Sciatic nerve (tissue), 2 donors: ENCODE measurements at regions of chr17 and their contacts with region 1.

Region 1: DNA sequence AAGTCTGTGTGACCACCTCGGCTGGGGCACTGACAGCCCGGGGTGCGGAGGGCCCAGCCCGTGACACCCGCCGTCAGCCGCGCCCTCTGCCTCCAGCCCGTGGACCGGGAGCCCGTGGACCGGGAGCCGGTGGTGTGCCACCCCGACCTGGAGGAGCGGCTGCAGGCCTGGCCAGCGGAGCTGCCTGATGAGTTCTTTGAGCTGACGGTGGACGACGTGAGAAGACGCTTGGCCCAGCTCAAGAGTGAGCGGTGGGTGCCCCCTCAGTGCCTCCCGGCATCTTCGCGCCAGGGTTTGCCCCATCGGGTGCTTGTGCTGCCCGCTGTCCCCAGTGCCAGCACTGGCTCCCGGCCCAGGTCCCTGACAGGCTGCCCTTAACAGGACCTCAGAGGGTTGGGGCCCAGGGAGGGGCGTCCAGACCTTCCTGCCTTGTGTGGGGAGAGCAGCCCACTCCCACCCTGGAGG is 13.7 kb downstream of the CENPX start:
- DNase-seq: no peak
- ATAC-seq: no peak

Region 2: GRCh38 chr17:82030470-82031302 is 21.7 kb after region 1 on chr17:
- intact Hi-C with region 1: loop called (anchors 1 kb)
- DNase-seq: peak; percentile 92
- ATAC-seq: peak; percentile 80